Heart right ventricle (tissue), 16 donors: ENCODE measurements at regions of chr1 and their contacts with region 1.

Region 1: GRCh38 chr1:84810343-84810742 is 82.7 kb downstream of the LPAR3 start:
- DNase-seq: no peak
- ATAC-seq: no peak
- H3K4me3 ChIP-seq: no peak overlapping the region
- H3K27ac ChIP-seq: no peak overlapping the region
- H3K4me1 ChIP-seq: no peaks in the 10 kb centered on the region
- H3K27me3 ChIP-seq: peaks cover 0 to 8% (median 0%) of the 10 kb centered on the region in 7 donors
- CTCF ChIP-seq: no peak

Region 2: GRCh38 chr1:84833198-84833597 is 22.9 kb after region 1 on chr1:
- intact Hi-C with region 1: loop called in 1 of 10 experiments (anchors 2 kb)
- DNase-seq: no peak
- ATAC-seq: no peak
- H3K4me3 ChIP-seq: no peak overlapping the region
- H3K27ac ChIP-seq: no peak overlapping the region
- H3K4me1 ChIP-seq: peaks cover 0 to 2% (median 0%) of the 10 kb centered on the region in 9 donors
- H3K27me3 ChIP-seq: no peaks in the 10 kb centered on the region
- CTCF ChIP-seq: no peak

Region 3: DNA sequence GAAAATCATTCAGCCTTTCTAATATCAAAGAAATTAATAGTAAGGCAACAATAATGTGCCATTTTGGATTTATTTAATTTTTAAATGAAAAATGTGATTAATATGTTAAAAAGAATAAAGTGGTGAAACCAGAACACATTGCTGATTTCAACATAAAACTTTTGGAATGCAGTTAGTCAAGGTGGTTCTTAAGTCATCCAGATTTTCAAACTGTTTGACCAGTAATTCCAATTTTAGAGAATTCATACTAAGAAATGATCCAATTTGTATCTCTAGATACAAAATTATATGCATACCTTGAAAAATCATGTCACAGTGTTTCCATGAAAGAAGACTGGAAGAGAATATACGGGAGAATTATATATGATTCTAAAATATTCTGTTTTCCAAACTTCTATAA is 292.1 kb after region 1 on chr1:
- intact Hi-C with region 1: no loop called
- DNase-seq: no peak
- ATAC-seq: no peak
- H3K4me3 ChIP-seq: no peak overlapping the region
- H3K27ac ChIP-seq: no peak overlapping the region
- H3K4me1 ChIP-seq: no peaks in the 10 kb centered on the region
- H3K27me3 ChIP-seq: no peaks in the 10 kb centered on the region
- CTCF ChIP-seq: no peak